Activated CD4-positive, alpha-beta T cell treated with anti-CD3 and anti-CD28 coated beads for 36 hours (primary cell): ENCODE measurements at regions of chr11 and their contacts with region 1.

Region 1: DNA sequence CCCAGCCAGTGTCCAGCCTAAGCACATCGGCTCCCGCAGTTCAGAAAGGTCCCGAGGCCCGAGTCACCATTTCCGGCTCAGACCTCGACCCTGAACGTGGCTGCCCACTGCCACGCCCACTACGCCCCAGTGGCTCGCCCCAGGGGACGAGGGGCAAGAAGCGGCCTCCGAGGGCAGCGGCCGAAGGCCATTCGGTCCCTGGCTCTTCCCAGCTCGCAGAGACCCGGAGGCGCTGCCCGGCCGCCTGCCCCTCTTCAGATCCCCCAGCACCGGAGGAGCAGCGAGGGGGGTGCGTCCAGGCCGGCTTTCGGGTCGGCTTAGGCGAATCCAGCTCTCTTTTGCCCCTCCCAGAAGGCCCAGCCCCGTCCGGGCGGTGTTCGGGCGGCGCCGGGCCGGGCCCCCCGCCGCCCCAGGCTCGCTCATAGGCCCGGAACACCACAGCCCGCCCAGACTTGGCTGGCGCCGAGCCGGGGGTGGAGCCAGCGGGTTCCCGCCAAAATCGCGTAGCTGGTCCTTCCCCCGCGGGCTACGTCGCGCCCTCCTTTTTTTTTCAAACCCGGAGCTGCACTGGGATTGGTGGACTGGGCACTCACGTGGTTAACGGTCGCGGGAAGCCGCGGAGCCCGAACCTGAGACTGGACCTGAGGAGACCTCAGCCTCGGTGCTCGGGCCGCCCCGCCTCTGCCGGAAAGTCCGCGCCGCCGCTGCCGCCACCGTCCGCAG is at the start of gene WEE1:
- DNase-seq: peak; percentile 99
- ATAC-seq: peak; percentile 94
- H3K4me3 Mint-ChIP-seq: peak within 1 kb of the TSS; percentile 94
- H3K27ac Mint-ChIP-seq: peak within 1 kb of the TSS; percentile 82
- H3K4me1 Mint-ChIP-seq: peaks cover 33% of the 10 kb centered on the region
- H3K27me3 Mint-ChIP-seq: peaks cover 3% of the 10 kb centered on the region
- total RNA-seq, gene WEE1: 44.8 to 46.5 TPM

Region 2: DNA sequence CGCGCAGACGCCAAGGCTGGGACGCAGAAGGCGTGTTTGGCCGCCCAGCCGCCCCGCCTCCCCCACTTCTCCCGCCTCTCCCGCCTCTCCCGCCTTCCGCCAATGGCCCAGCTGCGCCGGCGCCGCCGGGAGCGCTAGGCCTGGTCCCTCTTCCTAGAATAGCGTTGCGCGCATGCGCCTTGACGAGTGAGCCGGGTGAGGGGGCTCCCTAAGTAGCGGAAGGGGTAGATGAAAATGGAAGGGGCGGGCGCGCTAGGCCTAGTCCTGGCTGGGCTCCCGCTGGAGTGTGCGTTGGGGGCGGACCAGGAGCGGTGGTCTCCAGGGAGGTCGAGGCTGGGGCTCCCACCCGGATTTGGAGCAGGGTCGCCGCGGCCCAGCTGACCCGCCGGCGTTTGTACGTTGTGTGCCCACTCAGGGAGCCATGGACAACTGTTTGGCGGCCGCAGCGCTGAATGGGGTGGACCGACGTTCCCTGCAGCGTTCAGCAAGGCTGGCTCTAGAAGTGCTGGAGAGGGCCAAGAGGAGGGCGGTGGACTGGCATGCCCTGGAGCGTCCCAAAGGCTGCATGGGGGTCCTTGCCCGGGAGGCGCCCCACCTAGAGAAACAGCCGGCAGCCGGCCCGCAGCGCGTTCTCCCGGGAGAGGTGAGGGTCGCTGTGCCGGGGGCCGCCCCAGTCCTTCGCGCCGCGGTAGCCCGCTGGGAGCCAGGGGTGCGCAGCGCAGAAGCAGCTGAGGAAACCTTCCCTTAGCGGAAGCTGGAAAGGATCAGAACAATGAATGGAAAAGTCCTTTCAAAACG is 662.0 kb before region 1 on chr11 and contains the start of gene AKIP1:
- CTCF ChIA-PET with region 1: no interaction called
- POLR2A ChIA-PET with region 1: no interaction called
- intact Hi-C with region 1: loop called in 1 of 2 experiments (anchors 2 kb)
- DNase-seq: peak; percentile 94
- ATAC-seq: peak; percentile 76
- H3K4me3 Mint-ChIP-seq: peak within 1 kb of the TSS; percentile 86
- H3K27ac Mint-ChIP-seq: peak within 1 kb of the TSS; percentile 89
- H3K4me1 Mint-ChIP-seq: peaks cover 45% of the 10 kb centered on the region
- H3K27me3 Mint-ChIP-seq: peaks cover 6% of the 10 kb centered on the region
- total RNA-seq, gene AKIP1: 29.8 to 32.2 TPM

Region 3: DNA sequence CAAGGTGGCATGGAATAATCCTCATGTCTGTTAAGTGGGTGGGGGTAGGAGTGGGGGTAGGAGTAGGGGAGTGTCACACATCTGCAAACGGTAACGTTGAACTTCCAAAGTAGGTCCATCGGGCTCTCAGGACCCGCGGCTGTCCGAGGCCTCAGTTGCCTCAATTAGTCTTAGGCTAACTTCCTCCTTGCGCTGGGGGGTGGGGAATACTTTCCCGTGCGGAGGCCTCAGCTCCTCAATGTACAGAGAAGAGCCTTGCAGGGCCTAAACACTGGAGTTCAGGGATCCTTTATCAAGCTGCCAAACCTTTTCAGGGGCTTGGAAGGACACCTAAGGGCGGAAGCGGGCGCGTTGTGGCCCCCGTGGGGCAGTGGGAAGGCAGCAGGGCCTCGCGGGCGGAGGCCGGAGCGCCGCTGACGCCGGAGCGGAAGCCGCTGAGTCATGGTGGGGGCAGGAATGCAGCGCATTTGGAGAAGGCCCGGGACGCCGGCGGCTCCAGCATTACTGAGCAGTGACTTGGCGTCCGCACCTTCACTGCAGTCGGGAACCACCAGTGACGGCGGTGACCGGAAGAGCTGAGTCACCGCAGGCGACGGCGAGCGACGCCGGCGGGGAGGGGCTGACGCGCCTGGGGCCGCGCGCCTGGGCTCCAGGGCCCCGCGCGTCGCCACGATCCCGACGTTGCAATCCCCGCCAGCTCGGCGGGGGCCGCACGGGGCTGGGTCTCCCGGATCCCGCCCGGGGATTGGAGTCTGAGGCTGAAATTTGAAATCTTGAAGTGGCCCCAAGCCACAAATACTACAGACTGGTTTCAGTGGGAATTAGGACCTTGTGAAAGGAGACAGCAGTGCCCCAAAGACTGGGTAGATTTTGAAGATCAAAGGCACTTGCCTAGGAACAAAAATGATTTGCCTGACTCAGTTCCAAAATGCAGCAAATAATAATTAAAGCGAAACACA is 209.0 kb before region 1 on chr11:
- CTCF ChIA-PET with region 1: no interaction called
- POLR2A ChIA-PET with region 1: no interaction called
- intact Hi-C with region 1: loop called in 1 of 2 experiments (anchors 5 kb)
- DNase-seq: peak; percentile 92
- ATAC-seq: peak; percentile 88
- H3K4me3 Mint-ChIP-seq: peak overlapping the region; percentile 62
- H3K27ac Mint-ChIP-seq: peak overlapping the region; percentile 88
- H3K4me1 Mint-ChIP-seq: peaks cover 30% of the 10 kb centered on the region
- H3K27me3 Mint-ChIP-seq: no peaks in the 10 kb centered on the region

Region 4: DNA sequence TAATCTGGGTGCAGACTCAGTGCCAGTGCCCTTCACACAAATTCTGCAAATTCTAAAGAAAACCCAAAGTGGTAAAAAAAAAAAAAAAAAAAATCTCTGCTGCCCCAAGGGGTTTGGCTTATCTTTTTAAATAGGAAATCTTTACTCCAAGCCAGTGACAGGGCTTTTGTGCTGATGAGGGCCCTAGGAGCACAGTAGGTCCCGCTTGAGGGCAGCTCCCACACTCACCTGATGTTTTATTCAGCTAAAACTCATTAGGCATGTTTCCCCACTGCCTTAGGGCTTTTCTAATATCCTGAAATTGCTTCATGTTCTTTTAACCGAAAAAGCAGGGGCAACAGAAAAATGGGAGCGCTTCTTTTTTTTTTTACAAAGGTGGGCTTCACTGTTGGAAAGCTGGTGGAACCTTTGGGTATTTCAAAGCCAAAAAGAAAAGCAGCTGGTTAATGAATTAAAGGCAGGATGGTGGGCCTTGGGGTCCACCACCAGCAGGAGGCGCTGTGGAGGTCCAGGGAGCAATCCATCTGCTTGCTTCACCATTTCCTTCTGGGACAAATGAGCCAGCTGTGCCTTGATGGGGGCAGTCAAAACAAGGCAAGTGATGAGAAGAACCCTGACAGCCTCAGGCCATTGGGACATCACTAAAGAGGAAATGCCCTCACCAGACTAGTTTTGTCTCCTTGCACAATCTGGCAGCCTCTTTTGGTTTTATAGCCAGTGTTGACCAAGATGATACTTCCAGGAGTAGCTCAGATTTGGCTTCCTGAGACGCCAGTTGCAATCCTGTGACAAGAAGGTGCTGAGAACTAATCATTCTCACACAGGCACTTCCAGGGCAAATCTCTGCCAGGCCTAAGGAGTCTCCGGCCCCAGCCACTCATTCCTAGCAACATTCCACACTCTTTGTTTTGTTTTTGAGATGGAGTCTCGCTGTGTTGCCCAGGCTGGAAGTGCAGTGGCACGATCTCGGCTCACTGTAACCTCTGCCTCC is 38.1 kb before region 1 on chr11:
- CTCF ChIA-PET with region 1: interaction called, 9 read pairs
- POLR2A ChIA-PET with region 1: interaction called, 6 read pairs
- intact Hi-C with region 1: loop called (anchors 2 to 5 kb)
- DNase-seq: peak; percentile 91
- ATAC-seq: peak; percentile 71
- H3K4me3 Mint-ChIP-seq: no peak overlapping the region
- H3K27ac Mint-ChIP-seq: no peak overlapping the region
- H3K4me1 Mint-ChIP-seq: no peaks in the 10 kb centered on the region
- H3K27me3 Mint-ChIP-seq: no peaks in the 10 kb centered on the region

Region 5: DNA sequence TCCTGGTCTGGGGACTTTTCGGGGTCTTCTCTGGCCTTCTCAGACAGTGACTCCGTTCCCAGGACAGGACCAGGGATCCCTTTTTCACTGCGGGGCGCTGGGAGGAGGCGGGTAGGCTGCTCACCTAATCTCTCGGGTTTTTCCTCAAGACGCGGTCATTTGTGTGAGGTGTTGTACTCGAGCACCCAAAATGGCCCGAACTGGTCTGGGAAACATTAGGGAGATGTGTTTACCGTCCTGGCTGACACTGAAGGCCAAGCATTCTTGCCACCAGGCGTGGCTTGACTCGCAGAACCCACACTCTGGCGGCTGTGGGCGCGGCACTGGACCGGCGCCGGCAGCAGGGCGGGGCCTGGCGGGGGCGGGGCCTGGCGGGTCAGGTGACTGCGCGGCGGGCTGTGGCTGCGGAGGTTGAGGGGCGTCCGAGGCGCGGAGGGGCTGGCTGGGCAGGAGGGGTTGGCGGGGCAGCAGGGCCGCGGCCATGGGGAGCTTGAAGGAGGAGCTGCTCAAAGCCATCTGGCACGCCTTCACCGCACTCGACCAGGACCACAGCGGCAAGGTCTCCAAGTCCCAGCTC is 90.6 kb after region 1 on chr11 and contains the start of gene SWAP70:
- CTCF ChIA-PET with region 1: no interaction called
- POLR2A ChIA-PET with region 1: no interaction called
- intact Hi-C with region 1: loop called in 1 of 2 experiments (anchors 2 kb)
- DNase-seq: peak; percentile 85
- ATAC-seq: peak; percentile 94
- H3K4me3 Mint-ChIP-seq: peak within 1 kb of the TSS; percentile 79
- H3K27ac Mint-ChIP-seq: peak within 1 kb of the TSS; percentile 42
- H3K4me1 Mint-ChIP-seq: peaks cover 11% of the 10 kb centered on the region
- H3K27me3 Mint-ChIP-seq: peaks cover 24% of the 10 kb centered on the region
- total RNA-seq, gene SWAP70: 7.5 to 9.7 TPM

Region 6: GRCh38 chr11:9802291-9802861 is 229.2 kb after region 1 on chr11:
- CTCF ChIA-PET with region 1: no interaction called
- POLR2A ChIA-PET with region 1: no interaction called
- intact Hi-C with region 1: no loop called
- DNase-seq: no peak
- ATAC-seq: no peak
- H3K4me3 Mint-ChIP-seq: no peak overlapping the region
- H3K27ac Mint-ChIP-seq: peak overlapping the region; percentile 45
- H3K4me1 Mint-ChIP-seq: peaks cover 3% of the 10 kb centered on the region
- H3K27me3 Mint-ChIP-seq: no peaks in the 10 kb centered on the region